Activated naive CD4-positive, alpha-beta T cell treated with anti-CD3 and anti-CD28 coated beads for 36 hours (primary cell): ENCODE measurements at regions of chr2 and their contacts with region 1.

Region 1: GRCh38 chr2:169109502-169110409 is 40.4 kb downstream of the DHRS9 start:
- DNase-seq: peak; percentile 82
- H3K4me3 Mint-ChIP-seq: no peak overlapping the region
- H3K27ac Mint-ChIP-seq: no peak overlapping the region
- H3K4me1 Mint-ChIP-seq: peaks cover 39% of the 10 kb centered on the region
- H3K27me3 Mint-ChIP-seq: peaks cover 3% of the 10 kb centered on the region

Region 2: DNA sequence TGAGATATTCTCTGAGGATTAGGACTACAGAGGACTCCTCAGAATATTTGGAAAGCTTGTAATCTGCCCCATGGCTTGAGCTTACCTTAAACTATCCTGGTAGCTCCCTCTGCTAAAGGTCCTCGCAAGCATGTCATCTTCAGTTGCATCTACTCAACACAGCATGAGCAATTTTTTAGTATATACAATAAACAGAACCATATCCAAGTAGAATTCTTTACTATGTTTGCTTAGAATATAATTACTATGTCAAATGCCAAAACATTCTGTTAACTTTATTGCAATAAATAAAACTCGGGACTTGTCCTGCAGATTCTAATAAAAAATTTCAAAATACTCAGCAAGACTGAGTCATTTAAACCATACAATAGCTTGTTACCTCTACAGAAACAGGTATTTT is 141.4 kb before region 1 on chr2:
- CTCF ChIA-PET with region 1: interaction called, 12 read pairs
- intact Hi-C with region 1: no loop called
- DNase-seq: no peak
- H3K4me3 Mint-ChIP-seq: no peak overlapping the region
- H3K27ac Mint-ChIP-seq: no peak overlapping the region
- H3K4me1 Mint-ChIP-seq: peaks cover 14% of the 10 kb centered on the region
- H3K27me3 Mint-ChIP-seq: no peaks in the 10 kb centered on the region

Region 3: GRCh38 chr2:169082995-169083394 is 26.8 kb before region 1 on chr2:
- CTCF ChIA-PET with region 1: interaction called, 5 read pairs
- intact Hi-C with region 1: loop called (anchors 1 kb)
- DNase-seq: peak; percentile 10
- H3K4me3 Mint-ChIP-seq: no peak overlapping the region
- H3K27ac Mint-ChIP-seq: no peak overlapping the region
- H3K4me1 Mint-ChIP-seq: peaks cover 4% of the 10 kb centered on the region
- H3K27me3 Mint-ChIP-seq: no peaks in the 10 kb centered on the region

Region 4: DNA sequence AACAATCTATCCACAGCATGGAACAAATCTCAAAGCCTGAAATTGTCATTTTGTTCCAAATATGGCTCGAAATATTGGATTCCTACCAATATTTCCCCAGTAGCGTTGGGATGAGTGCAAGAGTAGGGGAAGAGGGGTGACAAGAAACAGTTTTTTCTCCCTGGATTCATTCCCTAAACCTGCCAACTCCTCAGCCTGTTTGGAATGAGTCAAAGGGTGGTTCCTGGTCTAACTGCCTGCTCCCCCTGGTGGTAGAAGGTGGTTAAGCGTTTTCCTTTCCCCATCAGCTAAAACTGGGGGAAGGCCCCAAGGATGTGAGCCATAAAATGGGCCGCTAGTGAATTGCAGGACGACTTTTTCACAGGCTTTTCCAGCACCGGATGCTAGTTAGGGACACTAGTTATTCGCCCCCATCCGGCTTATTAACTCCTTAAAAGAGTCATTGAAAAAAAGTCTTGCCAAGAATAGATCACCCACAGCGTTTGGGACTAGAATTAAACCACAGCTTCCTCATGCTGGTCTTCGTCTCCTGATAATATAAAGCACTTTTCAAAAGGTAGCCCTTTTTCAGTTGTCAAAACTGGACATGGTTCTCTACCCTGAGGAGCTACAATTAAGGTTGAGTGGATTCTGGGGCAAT is 32.1 kb after region 1 on chr2:
- CTCF ChIA-PET with region 1: interaction called, 122 read pairs
- intact Hi-C with region 1: loop called (anchors 1 kb)
- DNase-seq: peak; percentile 84
- H3K4me3 Mint-ChIP-seq: no peak overlapping the region
- H3K27ac Mint-ChIP-seq: no peak overlapping the region
- H3K4me1 Mint-ChIP-seq: no peaks in the 10 kb centered on the region
- H3K27me3 Mint-ChIP-seq: no peaks in the 10 kb centered on the region

Region 5: GRCh38 chr2:169363560-169364150 is 253.9 kb after region 1 on chr2:
- CTCF ChIA-PET with region 1: no interaction called
- intact Hi-C with region 1: loop called (anchors 2 kb)
- DNase-seq: peak; percentile 63
- H3K4me3 Mint-ChIP-seq: peak overlapping the region; percentile 84
- H3K27ac Mint-ChIP-seq: peak overlapping the region; percentile 57
- H3K4me1 Mint-ChIP-seq: peaks cover 32% of the 10 kb centered on the region
- H3K27me3 Mint-ChIP-seq: peaks cover 31% of the 10 kb centered on the region

Region 6: DNA sequence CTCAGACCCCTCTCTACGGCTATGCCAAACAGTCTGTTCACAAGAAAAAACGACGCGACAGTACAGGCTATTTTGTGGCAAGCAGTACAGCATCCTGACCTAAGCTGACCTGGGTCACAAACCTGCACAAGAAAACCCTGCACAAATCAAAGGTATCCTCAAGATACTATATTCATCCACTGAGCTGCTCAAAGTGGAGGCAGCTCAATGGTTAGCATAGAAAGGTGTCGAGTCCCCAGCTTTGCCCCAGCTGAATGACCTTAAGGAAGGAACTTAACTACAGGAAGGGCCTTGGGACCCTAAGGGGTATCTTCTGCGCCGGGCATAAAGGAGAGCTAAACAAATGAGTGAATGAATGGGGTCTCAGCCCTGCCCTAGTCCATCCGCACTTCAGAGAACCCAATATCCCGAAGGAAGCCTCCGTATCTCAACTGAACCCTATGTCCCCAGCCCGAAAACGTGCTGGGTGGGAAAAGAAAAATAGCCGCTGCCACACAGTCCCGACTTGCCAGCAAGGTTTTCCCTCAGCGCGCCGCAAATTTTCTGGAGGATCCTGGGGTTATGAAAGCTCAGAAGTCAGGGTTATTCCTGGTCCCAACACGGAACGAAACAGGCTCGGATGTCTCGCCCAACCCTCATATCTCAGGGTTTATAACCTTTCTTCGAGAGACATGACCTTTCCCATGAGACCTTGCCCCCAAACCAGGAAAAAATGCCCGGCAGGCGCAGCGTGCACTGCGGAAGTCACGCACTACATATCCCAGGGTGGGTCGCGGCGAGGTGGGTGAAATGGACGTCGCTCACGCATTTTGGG is 463.6 kb after region 1 on chr2 and contains the start of gene FASTKD1:
- CTCF ChIA-PET with region 1: no interaction called
- intact Hi-C with region 1: loop called (anchors 10 kb)
- DNase-seq: peak; percentile 94
- H3K4me3 Mint-ChIP-seq: peak within 1 kb of the TSS; percentile 98
- H3K27ac Mint-ChIP-seq: peak within 1 kb of the TSS; percentile 89
- H3K4me1 Mint-ChIP-seq: peaks cover 23% of the 10 kb centered on the region
- H3K27me3 Mint-ChIP-seq: no peaks in the 10 kb centered on the region
- total RNA-seq, gene FASTKD1: 41.3 to 42.7 TPM

Region 7: DNA sequence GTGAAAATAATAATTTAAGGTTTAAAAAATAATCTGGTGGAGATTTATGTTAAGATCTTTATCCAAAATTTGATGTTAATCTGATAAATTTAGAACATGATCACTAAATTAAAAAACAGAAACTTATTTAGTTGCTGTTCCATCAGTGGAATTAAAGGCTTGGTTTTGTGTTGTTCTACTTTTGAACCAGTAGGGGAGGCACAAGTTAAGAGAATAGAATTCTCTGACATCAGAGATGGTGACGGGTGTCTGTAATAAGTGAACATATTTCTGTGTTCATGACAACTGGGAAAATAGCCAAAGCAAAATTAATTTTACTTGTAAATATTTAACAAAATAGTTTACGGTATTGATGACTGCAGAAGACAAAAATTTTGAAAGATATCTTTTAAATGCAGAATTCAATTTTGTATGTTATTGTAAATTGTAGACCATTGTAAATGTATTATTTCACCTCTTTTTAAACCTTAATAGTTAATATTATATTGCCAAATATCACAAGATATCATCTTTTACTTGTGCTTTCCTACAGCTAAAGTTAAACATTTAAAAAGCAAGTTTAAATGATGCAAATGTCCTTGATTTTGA is 823.5 kb after region 1 on chr2:
- CTCF ChIA-PET with region 1: no interaction called
- intact Hi-C with region 1: loop called (anchors 10 kb)
- DNase-seq: no peak
- H3K4me3 Mint-ChIP-seq: no peak overlapping the region
- H3K27ac Mint-ChIP-seq: no peak overlapping the region
- H3K4me1 Mint-ChIP-seq: no peaks in the 10 kb centered on the region
- H3K27me3 Mint-ChIP-seq: no peaks in the 10 kb centered on the region